Activated CD4-positive, alpha-beta memory T cell treated with anti-CD3 and anti-CD28 coated beads for 36 hours (primary cell): ENCODE measurements at regions of chr3 and their contacts with region 1.

Region 1: DNA sequence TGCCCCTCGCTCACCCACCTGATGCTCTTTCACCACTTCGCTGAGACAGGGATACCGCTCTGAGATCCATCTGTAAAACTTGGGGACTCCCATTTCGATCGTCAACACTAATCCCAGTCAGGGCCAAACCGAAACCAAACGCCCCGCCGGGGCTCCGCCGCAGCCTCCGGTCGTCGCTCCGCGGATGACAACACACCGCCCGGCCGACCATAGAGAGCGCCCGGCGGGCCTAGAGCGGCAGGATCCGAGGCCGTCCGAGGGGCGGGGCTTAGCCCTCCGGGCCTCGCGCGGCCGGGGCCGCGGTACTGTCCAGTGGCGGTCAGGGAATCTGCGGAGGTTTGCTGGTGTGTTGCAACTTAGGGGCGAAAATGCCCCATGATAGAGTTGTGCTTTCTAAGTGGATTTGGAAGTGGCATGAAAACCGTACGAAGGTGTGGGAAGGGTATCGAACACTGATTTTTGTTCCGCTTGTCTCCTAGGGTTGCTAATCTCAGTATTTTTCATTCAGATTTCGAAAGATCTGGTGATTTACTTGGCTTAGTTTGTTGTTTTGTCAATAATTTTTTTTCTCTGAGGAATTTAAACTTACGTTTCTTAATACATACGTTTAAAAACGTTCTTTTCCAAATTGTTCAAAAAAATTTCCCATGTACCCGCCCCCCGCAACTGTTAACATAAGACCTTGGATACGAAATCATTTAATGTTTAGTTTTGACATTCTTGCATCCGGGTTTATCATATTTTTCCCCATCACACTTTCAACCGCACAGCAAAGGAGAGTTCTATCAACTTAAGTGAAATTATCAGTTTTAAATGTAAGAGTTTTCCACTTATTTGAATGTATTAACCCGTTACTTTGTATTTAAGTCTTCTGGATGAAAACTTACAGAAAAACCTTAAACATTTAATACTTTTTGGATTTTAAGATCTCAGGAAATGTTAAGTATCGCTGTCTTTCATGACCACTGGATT is at the start of gene XRN1:
- DNase-seq: peak; percentile 97
- H3K4me3 Mint-ChIP-seq: peak within 1 kb of the TSS; percentile 95
- H3K27ac Mint-ChIP-seq: peak within 1 kb of the TSS; percentile 96
- H3K4me1 Mint-ChIP-seq: peaks cover 31% of the 10 kb centered on the region
- H3K27me3 Mint-ChIP-seq: no peaks in the 10 kb centered on the region
- total RNA-seq, gene XRN1: 58.4 to 67.8 TPM

Region 2: DNA sequence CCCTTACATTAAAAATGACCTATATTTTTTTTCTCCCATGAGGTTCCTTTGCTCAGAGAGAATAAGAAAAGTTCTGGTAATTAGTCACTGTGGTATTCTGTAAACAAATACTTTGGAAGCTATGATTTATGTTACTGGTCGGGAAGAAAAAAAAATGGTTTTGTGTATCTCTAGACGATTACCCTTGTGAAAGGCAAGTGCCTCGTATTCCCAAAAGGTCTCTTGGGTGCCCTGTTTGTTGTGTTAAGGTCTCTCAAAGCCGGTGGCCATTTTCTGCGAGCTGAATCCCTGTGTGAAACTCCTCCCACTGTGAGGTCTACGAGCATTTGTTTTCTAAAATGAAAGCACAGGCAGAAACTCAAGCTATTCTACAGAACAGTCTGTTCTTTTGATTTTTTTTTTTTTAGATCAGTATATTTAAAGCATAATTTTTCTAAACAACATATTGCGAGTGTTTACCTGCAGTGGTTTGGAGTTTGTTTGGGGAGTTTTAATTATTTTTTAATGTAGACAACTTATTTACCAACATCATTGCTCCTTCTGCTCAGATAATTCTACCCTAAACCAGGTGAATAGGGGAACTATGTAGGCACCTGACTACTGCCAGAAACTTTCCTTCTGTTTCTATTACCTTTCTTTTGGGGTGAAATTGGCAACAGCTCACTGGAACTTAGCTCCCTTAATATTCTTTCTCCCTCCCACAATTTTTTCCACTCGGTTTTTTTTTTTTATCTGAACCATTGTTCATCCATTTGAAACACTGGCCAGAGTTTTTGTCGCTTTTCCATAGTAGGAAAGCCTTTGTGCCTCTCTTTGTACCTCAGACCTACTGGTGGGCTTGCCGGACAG is 1035.8 kb before region 1 on chr3:
- CTCF ChIA-PET with region 1: no interaction called
- POLR2A ChIA-PET with region 1: no interaction called
- intact Hi-C with region 1: loop called (anchors 5 kb)
- DNase-seq: peak; percentile 60
- H3K4me3 Mint-ChIP-seq: peak overlapping the region; percentile 70
- H3K27ac Mint-ChIP-seq: peak overlapping the region; percentile 92
- H3K4me1 Mint-ChIP-seq: peaks cover 87% of the 10 kb centered on the region
- H3K27me3 Mint-ChIP-seq: no peaks in the 10 kb centered on the region

Region 3: GRCh38 chr3:141796081-141796888 is 651.9 kb before region 1 on chr3:
- CTCF ChIA-PET with region 1: no interaction called
- POLR2A ChIA-PET with region 1: no interaction called
- intact Hi-C with region 1: loop called (anchors 1 kb)
- DNase-seq: peak; percentile 88
- H3K4me3 Mint-ChIP-seq: peak overlapping the region; percentile 84
- H3K27ac Mint-ChIP-seq: peak overlapping the region; percentile 94
- H3K4me1 Mint-ChIP-seq: peaks cover 48% of the 10 kb centered on the region
- H3K27me3 Mint-ChIP-seq: no peaks in the 10 kb centered on the region

Region 4: GRCh38 chr3:142429582-142429981 is 18.6 kb before region 1 on chr3:
- CTCF ChIA-PET with region 1: interaction called, 3 read pairs
- POLR2A ChIA-PET with region 1: no interaction called
- intact Hi-C with region 1: loop called (anchors 2 kb)
- DNase-seq: no peak
- H3K4me3 Mint-ChIP-seq: no peak overlapping the region
- H3K27ac Mint-ChIP-seq: no peak overlapping the region
- H3K4me1 Mint-ChIP-seq: peaks cover 30% of the 10 kb centered on the region
- H3K27me3 Mint-ChIP-seq: no peaks in the 10 kb centered on the region

Region 5: GRCh38 chr3:142578327-142579223 is 130.4 kb after region 1 on chr3 and contains the start of gene ATR:
- CTCF ChIA-PET with region 1: no interaction called
- POLR2A ChIA-PET with region 1: interaction called, 14 read pairs
- intact Hi-C with region 1: loop called (anchors 1 kb)
- DNase-seq: peak; percentile 98
- H3K4me3 Mint-ChIP-seq: peak within 1 kb of the TSS; percentile 98
- H3K27ac Mint-ChIP-seq: peak within 1 kb of the TSS; percentile 94
- H3K4me1 Mint-ChIP-seq: peaks cover 43% of the 10 kb centered on the region
- H3K27me3 Mint-ChIP-seq: no peaks in the 10 kb centered on the region
- total RNA-seq, gene ATR: 41.6 to 42.3 TPM

Region 6: GRCh38 chr3:143084856-143085731 is 637.0 kb after region 1 on chr3:
- CTCF ChIA-PET with region 1: no interaction called
- POLR2A ChIA-PET with region 1: no interaction called
- intact Hi-C with region 1: loop called (anchors 1 kb)
- DNase-seq: peak; percentile 36
- H3K4me3 Mint-ChIP-seq: peak overlapping the region; percentile 40
- H3K27ac Mint-ChIP-seq: no peak overlapping the region
- H3K4me1 Mint-ChIP-seq: peaks cover 34% of the 10 kb centered on the region
- H3K27me3 Mint-ChIP-seq: peaks cover 6% of the 10 kb centered on the region